GM12878 (cell line): ENCODE measurements at regions of chr15 and their contacts with region 1.

Region 1: DNA sequence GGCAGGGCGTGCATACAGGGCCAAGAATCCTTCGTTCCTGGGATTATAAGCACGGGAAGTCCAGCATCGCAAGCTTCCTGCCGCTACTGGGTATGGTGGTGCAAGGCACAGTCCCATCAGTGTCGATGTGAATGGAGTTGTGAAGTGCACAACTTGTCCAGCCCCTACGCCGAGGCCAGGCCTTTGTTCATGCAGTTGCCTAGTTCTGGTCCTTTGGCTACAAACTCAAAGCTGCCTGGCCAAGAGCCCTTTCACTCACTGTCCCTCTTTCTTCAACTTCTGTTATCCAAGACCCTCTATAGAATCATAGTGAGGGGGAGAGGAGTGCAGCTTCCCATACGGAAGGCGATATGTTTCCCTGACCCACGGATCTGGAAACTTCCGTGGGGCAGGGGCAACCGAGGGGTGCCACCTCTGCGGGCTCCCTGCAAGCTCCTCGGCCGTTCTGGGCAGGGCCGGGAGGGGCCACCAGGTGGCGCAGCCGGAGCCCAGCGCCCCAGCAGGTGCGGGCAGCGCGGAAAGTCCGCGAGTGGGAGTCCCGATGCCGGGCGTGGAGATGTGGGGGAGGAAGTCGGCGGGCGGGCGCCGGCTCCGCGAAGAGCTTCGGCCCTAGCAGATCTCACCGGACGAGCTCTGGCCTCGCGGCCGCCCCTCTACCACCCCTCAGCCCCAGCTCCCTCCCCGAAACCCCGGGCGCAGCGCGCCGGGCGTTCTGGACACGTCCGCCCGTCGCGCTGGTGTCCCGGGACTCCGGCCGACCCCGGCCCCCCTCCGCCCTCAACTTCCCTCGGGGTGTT is 693 bp downstream of the RASGRP1 start:
- DNase-seq: no peak
- ATAC-seq: peak; percentile 77
- H3K4me3 ChIP-seq: peak overlapping the region; percentile 75
- H3K27ac ChIP-seq: peak overlapping the region; percentile 72
- H3K4me1 ChIP-seq: peaks cover 37% of the 10 kb centered on the region
- H3K27me3 ChIP-seq: no peaks in the 10 kb centered on the region
- CTCF ChIP-seq: peak; percentile 88 to 95 (median 94)
- EP300 ChIP-seq: no peak
- POLR2A ChIP-seq: no peak; the same call in 1 of the 2 replicates
- RAD21 ChIP-seq: peak; percentile 75

Region 2: DNA sequence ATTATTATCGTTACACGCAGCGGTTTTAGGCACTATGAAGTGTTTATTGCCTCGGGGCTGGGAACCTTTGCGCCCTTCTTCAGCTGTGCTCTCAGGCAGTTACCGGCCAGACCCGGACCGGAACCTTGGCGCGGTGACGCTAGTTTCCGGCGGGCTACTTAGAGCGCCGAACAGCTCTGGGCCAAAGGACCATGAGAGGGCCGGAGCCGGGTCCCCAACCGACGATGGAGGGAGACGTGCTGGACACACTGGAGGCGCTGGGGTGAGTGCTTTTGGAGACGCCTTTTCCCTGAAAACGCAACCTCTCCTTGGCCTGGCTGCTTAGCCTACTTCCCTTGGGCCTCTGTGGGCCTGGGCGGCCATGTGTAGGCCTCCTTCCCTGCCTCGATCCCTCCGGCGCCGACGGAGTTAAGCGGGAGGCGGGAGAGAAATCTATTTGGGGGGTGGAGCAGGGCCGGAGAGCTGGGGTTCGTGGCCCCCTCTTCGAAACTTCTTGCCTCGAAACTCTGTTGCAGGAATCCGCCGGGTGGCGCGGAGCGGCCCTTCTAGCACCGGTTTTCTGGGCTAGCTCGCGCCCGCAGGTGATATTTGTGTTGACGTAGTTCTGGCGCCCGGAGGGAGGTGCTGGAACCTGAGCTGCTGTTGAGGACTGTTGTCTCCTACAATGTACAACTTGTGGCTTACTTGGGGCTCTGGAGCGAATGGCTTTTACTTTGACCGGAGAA is 109.8 kb before region 1 on chr15 and contains the start of gene FAM98B:
- CTCF ChIA-PET with region 1: interaction called, 6 read pairs
- POLR2A ChIA-PET with region 1: interaction called, 3 read pairs
- RAD21 ChIA-PET with region 1: interaction called, 4 read pairs
- SMC1A ChIA-PET with region 1: interaction called, 3 read pairs
- in situ Hi-C with region 1: no loop called
- intact Hi-C with region 1: loop called (anchors 5 kb)
- DNase-seq: peak; percentile 62
- ATAC-seq: peak; percentile 93
- H3K4me3 ChIP-seq: peak within 1 kb of the TSS; percentile 84
- H3K27ac ChIP-seq: peak within 1 kb of the TSS; percentile 85
- H3K4me1 ChIP-seq: no peaks in the 10 kb centered on the region
- H3K27me3 ChIP-seq: no peaks in the 10 kb centered on the region
- CTCF ChIP-seq: no peak
- EP300 ChIP-seq: no peak; a peak in 1 of 4 replicates
- POLR2A ChIP-seq: peak; percentile 94
- RAD21 ChIP-seq: no peak
- polyA plus RNA-seq, gene FAM98B: 4.2 to 8.4 TPM

Region 3: DNA sequence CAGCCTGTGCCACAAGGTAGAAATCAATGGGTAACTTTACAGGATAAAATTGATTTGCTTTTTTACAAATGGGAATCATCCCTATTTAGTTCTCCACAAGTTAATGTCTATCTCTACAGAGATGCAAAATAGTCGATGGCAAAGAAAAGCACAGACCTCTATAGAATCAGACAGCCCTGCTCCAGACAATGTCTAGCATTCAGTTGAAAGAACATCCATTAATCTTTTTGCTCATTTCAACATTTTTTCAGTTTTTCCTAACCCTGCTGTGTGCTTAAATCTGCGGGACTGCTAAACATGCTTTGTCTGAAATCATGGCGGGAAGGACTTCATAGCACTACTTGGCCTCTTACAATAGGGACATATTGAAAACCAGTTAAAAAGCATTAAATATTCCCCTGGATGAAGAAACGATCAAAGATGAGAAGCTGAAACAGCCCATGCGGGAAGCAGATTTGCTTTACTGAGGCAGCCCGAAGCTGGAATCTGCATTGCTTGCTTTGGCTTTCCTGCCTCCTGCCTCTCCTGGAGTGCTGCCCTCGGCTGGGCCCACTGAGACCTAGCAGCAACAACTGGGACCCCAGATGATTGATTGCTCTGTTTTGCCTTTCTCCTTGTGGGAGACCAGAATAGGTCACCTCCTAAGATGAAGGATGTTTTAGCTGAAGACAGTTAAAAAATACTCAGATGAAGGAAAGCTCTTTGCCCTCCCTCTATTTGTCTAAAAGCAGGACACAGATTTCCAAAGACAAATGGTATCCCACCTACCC is 39.2 kb after region 1 on chr15:
- CTCF ChIA-PET with region 1: interaction called, 11 read pairs
- POLR2A ChIA-PET with region 1: interaction called, 8 read pairs
- RAD21 ChIA-PET with region 1: interaction called, 11 read pairs
- SMC1A ChIA-PET with region 1: interaction called, 13 read pairs
- in situ Hi-C with region 1: no loop called
- intact Hi-C with region 1: no loop called
- DNase-seq: no peak
- ATAC-seq: peak; percentile 22; the same call in 2 of the 3 replicates
- H3K4me3 ChIP-seq: no peak overlapping the region
- H3K27ac ChIP-seq: no peak overlapping the region
- H3K4me1 ChIP-seq: no peaks in the 10 kb centered on the region; the same call in 1 of the 2 replicates
- H3K27me3 ChIP-seq: peaks cover 0 to 3% of the 10 kb centered on the region in 2 experiments; a peak in 1 of 4 replicates
- CTCF ChIP-seq: no peak
- EP300 ChIP-seq: no peak
- POLR2A ChIP-seq: no peak
- RAD21 ChIP-seq: no peak

Region 4: GRCh38 chr15:38618242-38618955 is 54.5 kb after region 1 on chr15:
- CTCF ChIA-PET with region 1: interaction called, 54 read pairs
- POLR2A ChIA-PET with region 1: interaction called, 26 read pairs
- RAD21 ChIA-PET with region 1: interaction called, 331 read pairs
- SMC1A ChIA-PET with region 1: interaction called, 194 read pairs
- in situ Hi-C with region 1: no loop called
- intact Hi-C with region 1: loop called (anchors 2 kb)
- DNase-seq: no peak
- ATAC-seq: no peak
- H3K4me3 ChIP-seq: no peak overlapping the region
- H3K27ac ChIP-seq: no peak overlapping the region
- H3K4me1 ChIP-seq: no peaks in the 10 kb centered on the region
- H3K27me3 ChIP-seq: no peaks in the 10 kb centered on the region
- CTCF ChIP-seq: no peak
- EP300 ChIP-seq: no peak
- POLR2A ChIP-seq: no peak
- RAD21 ChIP-seq: no peak

Region 5: GRCh38 chr15:38631126-38632075 is 67.5 kb after region 1 on chr15:
- CTCF ChIA-PET with region 1: interaction called, 116 read pairs
- POLR2A ChIA-PET with region 1: interaction called, 53 read pairs
- RAD21 ChIA-PET with region 1: interaction called, 331 read pairs
- SMC1A ChIA-PET with region 1: interaction called, 194 read pairs
- in situ Hi-C with region 1: no loop called
- intact Hi-C with region 1: no loop called
- DNase-seq: no peak
- ATAC-seq: peak; percentile 77
- H3K4me3 ChIP-seq: no peak overlapping the region
- H3K27ac ChIP-seq: no peak overlapping the region; the same call in 1 of the 2 replicates
- H3K4me1 ChIP-seq: no peaks in the 10 kb centered on the region
- H3K27me3 ChIP-seq: no peaks in the 10 kb centered on the region
- CTCF ChIP-seq: no peak
- EP300 ChIP-seq: no peak; a peak in 2 of 4 replicates
- POLR2A ChIP-seq: no peak
- RAD21 ChIP-seq: no peak

Region 6: GRCh38 chr15:38660738-38661137 is 96.8 kb after region 1 on chr15:
- CTCF ChIA-PET with region 1: interaction called, 10 read pairs
- POLR2A ChIA-PET with region 1: interaction called, 7 read pairs
- RAD21 ChIA-PET with region 1: interaction called, 16 read pairs
- SMC1A ChIA-PET with region 1: interaction called, 15 read pairs
- in situ Hi-C with region 1: no loop called
- intact Hi-C with region 1: no loop called
- DNase-seq: no peak
- ATAC-seq: peak; percentile 67
- H3K4me3 ChIP-seq: no peak overlapping the region
- H3K27ac ChIP-seq: no peak overlapping the region
- H3K4me1 ChIP-seq: no peaks in the 10 kb centered on the region; the same call in 1 of the 2 replicates
- H3K27me3 ChIP-seq: no peaks in the 10 kb centered on the region
- CTCF ChIP-seq: no peak
- EP300 ChIP-seq: no peak
- POLR2A ChIP-seq: no peak
- RAD21 ChIP-seq: no peak